Heart right ventricle (tissue), 16 donors: ENCODE measurements at regions of chr7 and their contacts with region 1.

Region 1: DNA sequence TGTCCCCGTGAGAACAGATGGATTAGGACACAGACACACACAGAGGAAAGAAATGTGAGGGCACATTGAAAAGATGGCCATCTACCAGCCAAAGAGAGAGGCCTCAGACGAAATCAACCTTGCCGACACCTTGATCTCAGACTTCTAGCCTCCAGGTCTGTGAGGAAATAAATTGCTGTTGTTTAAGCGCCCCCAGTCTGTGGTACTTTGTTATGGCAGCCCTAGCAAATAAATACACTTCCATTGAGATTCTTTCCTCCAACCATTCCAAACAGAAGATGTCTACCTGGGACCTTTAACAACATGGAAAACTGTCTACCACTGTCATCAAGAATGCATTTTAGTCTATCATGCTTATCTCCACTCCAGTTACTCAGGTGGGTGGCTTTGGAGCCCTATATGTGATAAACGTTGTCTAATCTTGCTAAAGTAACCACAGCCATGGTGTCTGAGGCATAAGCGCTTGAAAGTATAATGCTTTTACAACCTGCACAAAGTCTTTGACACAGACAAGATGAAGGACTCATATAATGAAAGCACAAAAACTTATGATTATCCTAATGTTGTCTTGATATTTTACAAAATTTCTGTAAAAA is 244.3 kb downstream of the MTERF1 start:
- DNase-seq: peak in 1 of 2 donors; percentile 11
- ATAC-seq: peak in 4 of 8 donors; percentile 25 to 52 (median 40)
- H3K4me3 ChIP-seq: no peak overlapping the region
- H3K27ac ChIP-seq: no peak overlapping the region
- H3K4me1 ChIP-seq: peaks cover 0 to 15% (median 0%) of the 10 kb centered on the region in 9 donors
- H3K27me3 ChIP-seq: no peaks in the 10 kb centered on the region
- CTCF ChIP-seq: peak; percentile 24 to 67 (median 58)

Region 2: DNA sequence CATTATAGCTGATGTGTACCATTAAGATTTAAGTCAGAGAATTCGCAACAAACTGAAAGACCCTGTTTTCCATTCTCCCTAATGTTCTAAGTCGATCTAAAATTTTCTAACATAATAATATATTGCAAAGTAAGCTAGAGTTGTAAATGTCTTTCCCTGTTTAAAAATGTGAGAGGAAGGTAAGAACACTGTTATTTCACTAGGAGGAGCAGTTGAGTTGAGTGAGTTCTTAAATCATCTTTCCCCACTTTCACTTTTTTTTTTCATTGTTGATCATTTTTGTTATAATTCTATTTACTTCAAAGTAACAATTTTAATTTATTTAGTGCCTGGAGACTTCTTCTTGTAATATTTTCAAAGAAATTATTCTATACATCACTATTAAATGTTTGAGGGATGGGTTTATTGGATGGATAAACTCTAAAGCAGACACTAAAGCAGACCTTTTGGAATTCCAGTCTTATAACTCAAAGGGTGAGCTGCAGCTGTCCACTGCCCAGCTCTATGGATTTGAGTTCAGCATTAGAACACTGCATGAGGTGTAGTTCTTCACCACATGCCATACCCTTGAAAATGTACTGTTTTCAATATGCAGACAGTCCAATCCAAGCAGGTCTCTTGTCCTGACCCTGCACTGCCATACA is 553.3 kb before region 1 on chr7:
- intact Hi-C with region 1: loop called in 9 of 10 experiments (anchors 2 to 10 kb)
- DNase-seq: no peak
- ATAC-seq: peak in 2 of 8 donors; percentile 45 to 60
- H3K4me3 ChIP-seq: no peak overlapping the region
- H3K27ac ChIP-seq: peak overlapping the region in 6 of 10 donors; percentile 43 to 68 (median 51)
- H3K4me1 ChIP-seq: peaks cover 3 to 42% (median 24%) of the 10 kb centered on the region in 9 donors
- H3K27me3 ChIP-seq: no peaks in the 10 kb centered on the region
- CTCF ChIP-seq: peak; percentile 27 to 72 (median 59)

Region 3: GRCh38 chr7:91098566-91098965 is 537.7 kb before region 1 on chr7:
- intact Hi-C with region 1: loop called in 1 of 10 experiments (anchors 10 kb)
- DNase-seq: no peak
- ATAC-seq: no peak
- H3K4me3 ChIP-seq: no peak overlapping the region
- H3K27ac ChIP-seq: no peak overlapping the region
- H3K4me1 ChIP-seq: peaks cover 0 to 3% (median 0%) of the 10 kb centered on the region in 9 donors
- H3K27me3 ChIP-seq: no peaks in the 10 kb centered on the region
- CTCF ChIP-seq: no peak

Region 4: DNA sequence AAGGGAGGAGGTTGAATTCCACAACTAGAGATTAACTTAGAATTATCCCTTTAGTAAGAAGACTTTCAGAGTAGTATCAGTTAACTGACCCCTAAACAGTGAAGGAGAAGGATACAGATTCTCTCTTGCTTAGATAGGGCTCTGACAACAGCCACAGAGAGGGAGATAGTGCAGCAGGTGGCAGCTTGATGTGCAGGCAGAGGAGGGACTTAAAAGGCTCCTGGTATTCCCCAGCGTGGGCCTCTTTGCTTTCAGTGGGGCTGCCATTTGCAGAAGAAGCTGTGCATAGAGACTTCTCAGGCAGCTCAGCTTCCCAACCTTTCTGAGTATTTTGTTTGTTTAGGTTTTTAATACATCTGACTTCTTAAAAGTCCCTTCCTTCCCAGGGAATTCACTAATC is 356.0 kb before region 1 on chr7:
- intact Hi-C with region 1: loop called in 5 of 10 experiments (anchors 5 to 10 kb)
- DNase-seq: no peak
- ATAC-seq: no peak
- H3K4me3 ChIP-seq: no peak overlapping the region
- H3K27ac ChIP-seq: no peak overlapping the region
- H3K4me1 ChIP-seq: no peaks in the 10 kb centered on the region
- H3K27me3 ChIP-seq: no peaks in the 10 kb centered on the region
- CTCF ChIP-seq: no peak

Region 5: DNA sequence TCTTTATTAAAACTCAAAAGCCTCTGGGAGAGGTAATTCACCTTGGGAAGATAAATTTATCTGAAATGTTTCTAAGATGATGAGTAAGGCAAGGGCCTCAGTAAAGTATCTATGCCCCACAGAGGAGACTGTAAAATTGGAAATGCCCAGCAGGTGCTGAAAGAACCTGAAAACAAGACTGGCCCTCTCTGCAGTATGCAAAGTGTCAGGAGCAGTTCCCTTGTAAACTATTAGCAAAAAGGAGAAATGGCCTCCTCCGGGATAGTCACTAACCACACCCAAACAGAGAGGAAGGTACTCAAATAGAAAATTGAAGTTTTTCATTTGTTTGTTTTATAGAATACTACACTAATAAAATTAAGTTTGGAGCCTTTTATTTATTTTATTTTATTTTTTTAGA is 290.8 kb before region 1 on chr7:
- intact Hi-C with region 1: loop called in 1 of 10 experiments (anchors 10 kb)
- DNase-seq: no peak
- ATAC-seq: no peak
- H3K4me3 ChIP-seq: no peak overlapping the region
- H3K27ac ChIP-seq: no peak overlapping the region
- H3K4me1 ChIP-seq: peaks cover 0 to 63% (median 50%) of the 10 kb centered on the region in 9 donors
- H3K27me3 ChIP-seq: no peaks in the 10 kb centered on the region
- CTCF ChIP-seq: no peak